ENCODE measurements at regions of chr1 and their contacts with region 1.

Region 1: GRCh38 chr1:27163103-27163502 is 8.2 kb upstream of the SLC9A1 start:
- DNase-seq: no peak
- H3K27ac ChIP-seq: no peak overlapping the region
- CTCF ChIP-seq: no peak

Region 2: GRCh38 chr1:27074175-27074780 is 88.8 kb before region 1 on chr1:
- CTCF ChIA-PET with region 1: no interaction called
- POLR2A ChIA-PET with region 1: no interaction called
- DNase-seq: no peak
- H3K27ac ChIP-seq: no peak overlapping the region; the same call in 1 of the 2 replicates
- CTCF ChIP-seq: no peak

Region 3: DNA sequence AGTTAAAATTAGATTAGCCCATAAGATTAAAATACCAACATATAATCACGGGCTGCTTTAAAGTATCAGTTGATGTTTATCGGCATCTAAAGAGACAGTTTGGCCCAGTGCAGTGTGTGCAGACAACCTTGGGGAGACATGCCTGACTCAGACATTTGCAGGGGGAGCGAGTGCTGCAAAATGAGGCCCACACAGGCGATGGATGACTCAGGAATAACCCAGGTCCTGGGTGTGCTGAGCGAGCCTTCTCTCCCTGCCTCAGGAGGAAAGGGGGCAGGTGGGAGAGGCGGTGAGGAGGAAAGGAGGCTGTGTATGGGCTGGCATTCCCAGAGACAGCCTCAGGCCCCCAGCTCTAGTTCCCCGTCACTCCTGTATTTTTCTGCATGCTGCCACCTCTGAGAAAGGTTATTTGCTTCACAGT is 17.2 kb before region 1 on chr1:
- CTCF ChIA-PET with region 1: no interaction called
- POLR2A ChIA-PET with region 1: interaction called, 12 read pairs
- DNase-seq: peak; percentile 84
- H3K27ac ChIP-seq: peak overlapping the region; percentile 86
- CTCF ChIP-seq: no peak

Measured in RWPE1 (cell line).